Gastrocnemius medialis (tissue), 4 donors: ENCODE measurements at regions of chr13 and their contacts with region 1.

Region 1: DNA sequence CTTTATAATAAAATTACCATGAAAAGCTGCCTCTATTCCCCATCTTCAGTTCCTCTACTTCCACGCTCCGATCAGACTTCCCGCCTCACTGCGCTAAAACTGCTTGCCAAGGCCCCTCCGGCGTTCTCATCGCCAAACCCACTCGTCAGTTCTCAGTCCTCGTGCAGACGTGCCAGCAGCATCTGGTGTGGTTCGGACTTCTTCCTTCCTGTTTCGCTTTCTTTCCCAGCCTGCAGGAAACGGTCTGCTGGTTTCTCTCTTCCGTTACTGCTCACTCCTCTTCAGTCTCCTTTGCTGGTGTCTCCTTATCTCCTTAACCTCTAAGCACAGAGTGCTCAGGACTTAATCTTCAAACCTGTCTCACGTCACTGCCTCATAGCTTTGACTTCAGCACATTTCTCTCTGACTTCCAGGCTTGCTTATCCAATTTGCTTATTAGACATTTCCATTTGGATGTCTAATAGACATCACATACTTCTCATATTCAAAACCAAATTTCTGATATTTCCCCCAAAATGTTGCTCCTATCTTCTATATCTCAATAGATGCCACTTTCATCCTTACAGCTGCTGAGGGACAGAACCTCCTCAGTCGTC is 40.3 kb downstream of the RCBTB2 start:
- DNase-seq: peak; percentile 52 to 67
- ATAC-seq: peak; percentile 71 to 74
- H3K4me3 ChIP-seq: peak overlapping the region; percentile 26 to 47 (median 37)
- H3K27ac ChIP-seq: peak overlapping the region; percentile 57 to 73 (median 67)
- H3K4me1 ChIP-seq: peaks cover 9 to 17% of the 10 kb centered on the region in 2 donors
- H3K27me3 ChIP-seq: no peaks in the 10 kb centered on the region
- CTCF ChIP-seq: no peak
- POLR2A ChIP-seq: no peak

Region 2: DNA sequence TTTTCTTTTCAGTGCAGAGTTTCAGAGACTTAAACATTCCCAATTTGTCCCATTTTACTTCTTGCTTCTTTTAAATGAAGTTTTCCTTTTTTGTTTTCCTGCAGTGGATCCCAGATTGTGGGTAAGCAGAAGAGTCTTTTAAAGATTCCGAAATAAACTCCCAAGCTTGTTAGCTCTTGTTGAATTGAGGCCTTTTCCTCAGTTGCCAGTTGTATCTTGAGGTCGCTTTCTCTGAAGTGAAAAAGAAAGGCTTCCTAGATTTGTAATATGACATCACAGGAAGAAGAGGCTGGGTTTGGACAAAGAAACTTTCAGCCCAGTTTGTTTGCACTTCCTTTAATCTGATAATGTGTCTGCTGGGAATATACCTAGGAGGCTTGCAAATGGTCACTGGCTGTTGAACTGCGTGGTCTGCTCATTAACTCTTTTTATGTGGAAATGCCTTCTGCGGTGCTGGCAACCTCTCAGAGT is 79.7 kb before region 1 on chr13 and contains the start of gene LPAR6:
- in situ Hi-C with region 1: no loop called
- intact Hi-C with region 1: loop called (anchors 5 kb)
- DNase-seq: no peak
- ATAC-seq: peak; percentile 82 to 89
- H3K4me3 ChIP-seq: peak within 1 kb of the TSS; percentile 46 to 52 (median 50)
- H3K27ac ChIP-seq: peak within 1 kb of the TSS; percentile 49 to 70 (median 62)
- H3K4me1 ChIP-seq: no peaks in the 10 kb centered on the region
- H3K27me3 ChIP-seq: no peaks in the 10 kb centered on the region
- CTCF ChIP-seq: no peak
- POLR2A ChIP-seq: peak; percentile 60 to 84
- total RNA-seq, gene LPAR6: 4.1 to 20.6 (median 6.1) TPM